Activated CD8-positive, alpha-beta T cell treated with anti-CD3 and anti-CD28 coated beads, Interleukin-2, amount 10 ng/mL, durations not matched to agents 7 days and 5 days (primary cell): ENCODE measurements at regions of chr17 and their contacts with region 1.

Region 1: DNA sequence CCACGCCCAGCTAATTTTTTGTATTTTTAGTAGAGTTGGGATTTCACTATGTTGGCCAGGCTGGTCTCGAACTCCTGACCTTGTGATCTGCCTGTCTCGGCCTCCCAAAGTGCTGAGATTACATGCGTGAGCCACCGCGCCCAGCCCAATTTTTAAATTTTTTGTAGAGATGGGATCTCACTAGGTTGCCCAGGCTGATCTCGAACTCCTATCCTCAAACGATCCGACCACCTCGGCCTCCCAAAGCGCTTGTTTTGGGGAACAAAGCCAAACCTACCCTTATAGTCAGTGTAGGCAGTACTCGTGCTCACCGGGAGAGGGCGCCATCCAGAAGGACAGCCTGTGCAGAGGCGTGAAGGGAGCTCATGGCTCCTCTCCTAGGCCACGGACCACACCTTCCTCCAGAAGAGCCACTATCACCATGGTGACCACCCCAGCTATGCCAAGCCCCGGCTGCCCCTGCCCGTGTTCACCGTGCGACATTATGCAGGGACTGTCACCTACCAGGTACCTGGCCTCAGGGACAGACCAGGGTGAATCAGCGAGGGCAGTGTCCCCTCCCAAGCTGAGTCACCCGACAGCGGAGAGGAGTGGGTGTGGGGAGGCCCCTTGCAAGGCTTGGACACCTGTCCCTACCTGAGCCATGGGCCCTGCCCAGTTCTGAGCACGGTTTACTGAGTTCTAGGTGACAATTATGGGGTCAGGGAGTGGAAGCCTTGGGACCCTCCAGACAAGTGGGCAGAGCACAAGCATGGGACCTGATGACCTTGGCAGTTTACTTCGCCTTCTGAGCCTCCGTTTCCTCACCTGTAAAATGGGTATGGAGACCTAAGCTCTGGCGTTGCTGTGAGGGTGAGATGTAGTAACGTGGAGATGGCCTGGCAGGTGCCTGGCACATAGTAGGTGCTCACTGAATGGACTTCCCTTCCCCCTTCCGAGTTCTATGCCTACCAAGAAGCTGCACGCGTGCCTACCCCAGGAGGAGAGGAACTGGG is 13.8 kb downstream of the MYO15B start:
- DNase-seq: peak; percentile 78
- ATAC-seq: peak; percentile 86
- H3K4me3 Mint-ChIP-seq: no peak overlapping the region
- H3K27ac Mint-ChIP-seq: no peak overlapping the region
- H3K4me1 Mint-ChIP-seq: peaks cover 5% of the 10 kb centered on the region
- H3K27me3 Mint-ChIP-seq: no peaks in the 10 kb centered on the region

Region 2: DNA sequence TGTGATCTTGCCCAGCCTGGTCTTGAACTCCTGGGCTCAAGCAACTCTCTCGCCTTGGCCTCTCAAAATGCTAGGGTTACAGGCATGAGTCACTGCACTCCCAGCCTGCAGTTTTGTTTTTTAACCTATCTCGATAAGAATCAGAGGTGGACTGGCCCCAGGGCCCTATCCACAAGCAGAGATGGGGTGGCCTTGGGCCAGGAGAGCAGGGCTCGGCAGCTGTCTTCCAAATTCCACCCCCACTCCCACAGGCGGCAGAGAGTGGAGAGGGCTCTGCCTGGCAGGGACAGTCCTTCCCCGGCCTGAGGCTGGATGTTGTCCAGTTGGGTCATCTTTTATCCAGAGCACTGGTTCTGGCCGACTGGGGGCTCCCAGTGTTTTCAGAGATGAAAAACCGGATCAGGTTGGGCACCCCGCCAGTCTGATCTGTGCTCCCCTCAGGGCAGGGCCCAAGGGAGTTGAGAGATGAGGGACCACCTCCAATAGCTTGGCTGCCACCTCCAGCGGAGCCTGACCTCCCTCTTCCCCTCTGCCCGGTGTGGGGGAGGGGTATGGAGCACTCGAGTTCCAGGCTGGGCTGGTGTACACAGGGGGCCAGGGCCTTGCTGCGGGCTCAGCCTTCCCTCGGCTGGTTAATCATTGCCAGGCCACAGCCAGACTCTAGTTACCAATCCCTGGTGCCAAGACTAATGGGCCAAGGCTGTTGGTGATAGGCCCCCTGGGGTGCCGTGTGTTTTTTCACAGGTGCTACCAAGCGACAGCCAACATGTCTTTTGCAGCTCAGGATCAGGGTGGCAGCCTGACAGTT is 44.1 kb before region 1 on chr17:
- CTCF ChIA-PET with region 1: no interaction called
- POLR2A ChIA-PET with region 1: no interaction called
- DNase-seq: no peak
- ATAC-seq: no peak
- H3K4me3 Mint-ChIP-seq: no peak overlapping the region
- H3K27ac Mint-ChIP-seq: no peak overlapping the region
- H3K4me1 Mint-ChIP-seq: no peaks in the 10 kb centered on the region
- H3K27me3 Mint-ChIP-seq: no peaks in the 10 kb centered on the region

Region 3: DNA sequence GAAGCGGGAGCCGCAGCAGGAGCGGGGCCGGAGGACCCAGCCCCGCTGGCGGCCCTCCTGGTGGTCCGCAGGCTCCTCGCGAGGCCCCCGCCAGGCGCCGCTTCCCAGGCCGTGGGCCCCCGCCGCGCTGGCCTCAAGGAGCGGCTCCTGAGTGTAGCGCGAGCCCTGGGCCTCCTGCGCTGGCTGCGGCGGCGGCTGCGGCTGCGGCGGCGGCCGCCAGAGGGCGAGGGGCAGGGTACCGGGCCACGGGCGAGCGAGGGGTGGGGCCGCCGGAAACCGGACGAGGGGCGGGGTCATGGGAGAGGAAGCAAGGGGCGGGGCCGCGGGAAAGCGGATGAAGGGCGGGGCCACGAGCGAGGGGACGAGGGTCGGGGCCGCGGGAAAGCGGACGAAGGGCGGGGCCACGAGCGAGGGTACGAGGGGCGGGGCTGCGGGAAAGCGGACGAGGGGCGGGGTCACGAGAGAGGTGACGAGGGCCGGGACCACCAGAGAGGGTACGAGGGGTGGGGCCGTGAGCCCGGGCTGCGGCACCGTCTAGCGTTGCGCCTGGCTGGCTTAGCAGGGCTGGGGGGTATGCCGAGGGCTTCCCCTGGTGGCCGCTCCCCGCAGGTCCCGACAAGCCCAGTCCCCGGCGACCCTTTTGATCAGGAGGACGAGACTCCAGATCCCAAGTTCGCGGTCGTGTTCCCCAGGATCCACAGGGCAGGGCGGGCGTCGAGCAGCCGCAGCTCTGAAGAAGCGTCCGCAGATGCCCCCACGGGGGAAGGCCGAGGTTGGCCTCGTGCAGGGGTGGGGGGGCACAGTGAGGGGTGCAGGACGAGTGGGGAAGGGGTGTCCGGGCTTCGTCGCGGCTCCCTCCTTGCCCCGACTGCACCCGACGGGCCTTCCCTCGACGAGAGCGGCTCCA is 12.1 kb before region 1 on chr17:
- CTCF ChIA-PET with region 1: interaction called, 18 read pairs
- POLR2A ChIA-PET with region 1: interaction called, 6 read pairs
- DNase-seq: peak; percentile 98
- ATAC-seq: peak; percentile 85
- H3K4me3 Mint-ChIP-seq: peak overlapping the region; percentile 61
- H3K27ac Mint-ChIP-seq: peak overlapping the region; percentile 82
- H3K4me1 Mint-ChIP-seq: peaks cover 24% of the 10 kb centered on the region
- H3K27me3 Mint-ChIP-seq: peaks cover 18% of the 10 kb centered on the region

Region 4: DNA sequence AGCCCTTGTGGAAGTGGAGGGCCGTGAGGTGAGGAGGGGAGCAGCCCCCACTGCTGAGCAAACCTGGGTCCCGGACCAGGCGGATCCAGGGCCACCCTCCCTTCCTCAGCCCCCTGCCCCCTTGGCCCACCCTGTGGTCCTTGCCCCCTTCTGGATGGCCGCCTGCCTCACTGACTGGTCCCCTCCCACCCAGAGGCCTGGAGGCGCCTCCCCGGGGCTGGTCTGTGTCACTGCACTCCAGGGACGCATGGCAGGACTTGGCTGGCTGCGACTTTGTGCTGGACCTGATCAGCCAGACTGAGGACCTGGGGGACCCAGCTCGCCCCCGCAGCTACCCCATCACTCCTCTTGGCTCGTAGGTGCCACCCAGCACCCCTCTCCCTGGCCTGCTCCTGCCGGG is 12.7 kb after region 1 on chr17:
- CTCF ChIA-PET with region 1: interaction called, 21 read pairs
- POLR2A ChIA-PET with region 1: no interaction called
- DNase-seq: no peak
- ATAC-seq: no peak
- H3K4me3 Mint-ChIP-seq: no peak overlapping the region
- H3K27ac Mint-ChIP-seq: no peak overlapping the region
- H3K4me1 Mint-ChIP-seq: no peaks in the 10 kb centered on the region
- H3K27me3 Mint-ChIP-seq: no peaks in the 10 kb centered on the region

Region 5: GRCh38 chr17:75738218-75738802 is 137.0 kb after region 1 on chr17:
- CTCF ChIA-PET with region 1: interaction called, 11 read pairs
- POLR2A ChIA-PET with region 1: no interaction called
- DNase-seq: peak; percentile 72
- ATAC-seq: peak; percentile 65
- H3K4me3 Mint-ChIP-seq: peak overlapping the region; percentile 28
- H3K27ac Mint-ChIP-seq: peak overlapping the region; percentile 89
- H3K4me1 Mint-ChIP-seq: peaks cover 13% of the 10 kb centered on the region
- H3K27me3 Mint-ChIP-seq: no peaks in the 10 kb centered on the region